ENCODE measurements at regions of chr10 and their contacts with region 1.

Region 1: DNA sequence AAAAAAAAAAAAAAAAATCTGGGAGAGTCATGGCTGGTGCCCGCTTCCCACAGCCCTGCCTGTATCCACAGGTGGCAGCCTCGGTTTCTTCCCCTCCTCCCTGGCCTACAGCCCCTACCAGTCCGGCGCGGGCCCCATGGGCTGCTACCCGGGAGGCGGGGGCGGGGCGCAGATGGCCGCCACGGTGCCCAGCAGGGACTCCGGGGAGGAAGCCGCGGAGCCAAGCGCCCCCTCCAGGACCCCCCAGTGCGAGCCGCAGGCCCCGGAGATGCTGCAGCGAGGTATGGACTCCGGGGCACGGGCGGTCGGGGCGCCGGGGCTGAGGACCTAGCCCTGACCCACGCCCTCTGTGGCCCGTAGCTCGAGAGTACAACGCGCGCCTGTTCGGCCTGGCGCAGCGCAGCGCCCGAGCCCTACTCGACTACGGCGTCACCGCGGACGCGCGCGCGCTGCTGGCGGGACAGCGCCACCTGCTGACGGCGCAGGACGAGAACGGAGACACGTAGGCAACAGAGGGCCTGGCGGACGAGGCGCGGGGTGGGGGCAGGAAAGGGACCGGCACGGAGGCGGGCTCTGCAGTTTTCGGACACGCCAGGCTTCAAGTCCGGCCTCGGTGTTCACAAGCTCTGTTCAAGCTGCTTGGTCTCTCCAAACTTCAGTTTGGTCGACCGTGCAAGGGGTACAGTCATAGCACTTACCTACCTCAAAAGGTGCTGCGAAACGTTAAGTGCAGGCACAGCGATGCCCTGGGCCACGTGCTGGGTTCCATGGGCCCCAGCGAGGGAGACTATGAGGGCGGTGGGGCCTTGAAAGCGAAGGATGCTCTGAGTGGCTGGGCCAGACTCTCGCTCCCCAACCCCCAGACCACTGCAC is 3.9 kb downstream of the NFKB2 start:
- DNase-seq: peak; percentile 84 to 94 (median 88)
- H3K4me3 ChIP-seq: peak overlapping the region; percentile 56 to 96 (median 77)
- H3K27ac ChIP-seq: peak overlapping the region; percentile 35 to 96 (median 89)
- H3K27me3 ChIP-seq: peaks cover 0 to 2% (median 0%) of the 10 kb centered on the region in 45 donors
- CTCF ChIP-seq: peak; percentile 82 to 100 (median 97)

Region 2: GRCh38 chr10:102229810-102230263 is 169.6 kb before region 1 on chr10:
- intact Hi-C with region 1: loop called (anchors 2 to 5 kb)
- DNase-seq: peak; percentile 69 to 88 (median 80)
- H3K4me3 ChIP-seq: peak overlapping the region in 58 of 59 donors; percentile 12 to 62 (median 44)
- H3K27ac ChIP-seq: no peak overlapping the region
- H3K27me3 ChIP-seq: peaks cover 0 to 53% (median 28%) of the 10 kb centered on the region in 45 donors
- CTCF ChIP-seq: peak; percentile 60 to 98 (median 92)

Region 3: GRCh38 chr10:102322914-102323313 is 76.5 kb before region 1 on chr10:
- intact Hi-C with region 1: no loop called
- DNase-seq: no peak
- H3K4me3 ChIP-seq: no peak overlapping the region
- H3K27ac ChIP-seq: no peak overlapping the region
- H3K27me3 ChIP-seq: no peaks in the 10 kb centered on the region
- CTCF ChIP-seq: no peak

Region 4: GRCh38 chr10:102476466-102477141 is 77.2 kb after region 1 on chr10:
- intact Hi-C with region 1: loop called in 1 of 2 experiments (anchors 2 kb)
- DNase-seq: peak in 1 of 10 donors; percentile 18
- H3K4me3 ChIP-seq: no peak overlapping the region
- H3K27ac ChIP-seq: peak overlapping the region in 24 of 59 donors; percentile 8 to 68 (median 30)
- H3K27me3 ChIP-seq: no peaks in the 10 kb centered on the region
- CTCF ChIP-seq: no peak

Region 5: DNA sequence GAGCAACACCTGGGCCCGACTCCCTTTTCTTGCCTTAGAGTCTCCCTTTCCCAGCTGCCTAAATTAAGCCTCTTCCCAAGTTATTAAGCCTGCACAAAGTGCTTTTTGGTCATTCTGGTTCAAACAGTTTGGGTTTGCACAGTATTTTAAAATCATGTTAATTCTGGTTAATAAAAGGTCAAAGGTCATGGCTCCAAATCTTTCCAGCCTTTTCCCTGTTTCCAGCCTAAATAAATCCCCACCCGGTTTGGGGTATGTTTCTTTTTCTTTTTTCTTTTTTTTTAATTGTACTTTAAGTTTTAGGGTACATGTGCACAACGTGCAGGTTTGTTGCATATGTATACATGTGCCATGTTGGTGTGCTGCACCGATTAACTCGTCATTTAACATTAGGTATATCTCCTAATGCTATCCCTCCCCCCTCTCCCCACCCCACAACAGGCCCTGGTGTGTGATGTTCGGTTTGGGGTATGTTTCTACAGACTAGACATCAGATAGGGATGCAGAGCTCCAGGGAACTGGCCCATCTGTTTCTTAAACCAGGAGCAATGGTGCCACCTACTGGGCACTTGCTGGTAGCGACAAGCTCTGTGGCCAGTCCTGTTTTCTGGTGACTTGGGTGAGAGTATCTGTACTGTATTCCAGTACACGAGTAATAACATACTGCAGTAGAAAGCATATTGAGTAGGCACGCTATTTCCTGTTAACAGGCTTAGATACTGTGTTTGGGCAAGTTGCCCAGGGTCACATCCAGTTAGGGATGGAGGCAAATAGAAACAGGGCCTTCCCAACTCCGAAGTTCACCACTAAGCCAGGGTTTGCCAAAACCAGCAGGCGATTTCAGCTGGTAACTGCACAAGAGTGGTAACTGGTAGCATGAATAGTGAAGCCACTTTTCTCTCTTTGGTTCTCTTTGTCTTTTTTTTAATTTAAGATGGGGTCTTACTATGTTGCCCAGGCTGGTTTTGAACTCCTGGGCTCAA is 184.3 kb after region 1 on chr10:
- intact Hi-C with region 1: loop called in 1 of 2 experiments (anchors 5 kb)
- DNase-seq: peak; percentile 83 to 96 (median 90)
- H3K4me3 ChIP-seq: no peak overlapping the region
- H3K27ac ChIP-seq: peak overlapping the region in 6 of 59 donors; percentile 5 to 71 (median 24)
- H3K27me3 ChIP-seq: no peaks in the 10 kb centered on the region
- CTCF ChIP-seq: peak; percentile 68 to 96 (median 90)

Measured in dorsolateral prefrontal cortex (tissue), 120 donors.